ENCODE measurements at regions of chr16 and their contacts with region 1.

Region 1: GRCh38 chr16:25413985-25414384 is 156.3 kb upstream of the ZKSCAN2 start:
- DNase-seq: peak; percentile 27
- H3K4me3 ChIP-seq: no peak overlapping the region
- H3K27ac ChIP-seq: no peak overlapping the region
- H3K4me1 ChIP-seq: no peaks in the 10 kb centered on the region
- H3K27me3 ChIP-seq: no peaks in the 10 kb centered on the region
- CTCF ChIP-seq: no peak

Region 2: GRCh38 chr16:24635900-24636610 is 777.9 kb before region 1 on chr16:
- CTCF ChIA-PET with region 1: no interaction called
- dilution Hi-C with region 1: no loop called
- in situ Hi-C with region 1: no loop called
- intact Hi-C with region 1: no loop called
- DNase-seq: peak; percentile 79
- H3K4me3 ChIP-seq: no peak overlapping the region
- H3K27ac ChIP-seq: no peak overlapping the region
- H3K4me1 ChIP-seq: peaks cover 18% of the 10 kb centered on the region
- H3K27me3 ChIP-seq: no peaks in the 10 kb centered on the region
- CTCF ChIP-seq: no peak

Region 3: DNA sequence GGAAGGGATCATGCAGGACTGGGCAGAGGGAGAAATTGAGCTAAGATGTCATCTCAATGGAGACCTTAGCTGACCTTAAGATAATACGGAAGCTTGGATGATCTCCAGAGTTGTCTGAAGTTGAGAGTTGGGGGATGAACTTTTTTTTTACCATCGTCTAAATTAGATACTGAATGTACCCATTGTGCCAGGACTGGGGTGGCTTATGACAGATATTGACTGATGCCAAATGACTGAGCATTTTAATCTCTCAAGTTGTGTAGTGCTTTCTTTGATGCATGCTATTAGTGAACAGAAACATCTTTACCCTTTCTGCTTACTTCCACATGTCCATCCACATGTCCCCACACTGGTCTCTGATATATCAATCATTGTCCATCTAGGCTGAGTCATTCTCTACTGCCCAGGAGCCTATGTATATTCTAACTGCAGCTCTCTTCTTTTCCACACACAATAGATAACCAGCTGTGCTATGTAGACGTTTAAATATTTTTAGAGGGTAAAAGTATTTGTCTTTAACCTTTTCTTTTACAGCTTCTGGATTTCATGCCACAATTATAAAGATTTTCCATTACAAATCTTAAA is 96.2 kb before region 1 on chr16:
- CTCF ChIA-PET with region 1: no interaction called
- dilution Hi-C with region 1: no loop called
- in situ Hi-C with region 1: loop called (anchors 25 kb)
- intact Hi-C with region 1: no loop called
- DNase-seq: no peak
- H3K4me3 ChIP-seq: no peak overlapping the region
- H3K27ac ChIP-seq: no peak overlapping the region
- H3K4me1 ChIP-seq: no peaks in the 10 kb centered on the region
- H3K27me3 ChIP-seq: no peaks in the 10 kb centered on the region
- CTCF ChIP-seq: no peak